Activated CD4-positive, alpha-beta memory T cell treated with anti-CD3 and anti-CD28 coated beads for 36 hours (primary cell): ENCODE measurements at regions of chrX and their contacts with region 1.

Region 1: GRCh38 chrX:17590892-17591740 is 146.2 kb upstream of the SCML1 start:
- DNase-seq: peak; percentile 62
- H3K4me3 Mint-ChIP-seq: no peak overlapping the region
- H3K27ac Mint-ChIP-seq: peak overlapping the region; percentile 74
- H3K4me1 Mint-ChIP-seq: peaks cover 20% of the 10 kb centered on the region
- H3K27me3 Mint-ChIP-seq: peaks cover 4% of the 10 kb centered on the region

Region 2: GRCh38 chrX:17242470-17242869 is 348.6 kb before region 1 on chrX:
- CTCF ChIA-PET with region 1: interaction called, 10 read pairs
- POLR2A ChIA-PET with region 1: no interaction called
- intact Hi-C with region 1: loop called (anchors 1 kb)
- DNase-seq: peak; percentile 23
- H3K4me3 Mint-ChIP-seq: no peak overlapping the region
- H3K27ac Mint-ChIP-seq: no peak overlapping the region
- H3K4me1 Mint-ChIP-seq: no peaks in the 10 kb centered on the region
- H3K27me3 Mint-ChIP-seq: no peaks in the 10 kb centered on the region

Region 3: DNA sequence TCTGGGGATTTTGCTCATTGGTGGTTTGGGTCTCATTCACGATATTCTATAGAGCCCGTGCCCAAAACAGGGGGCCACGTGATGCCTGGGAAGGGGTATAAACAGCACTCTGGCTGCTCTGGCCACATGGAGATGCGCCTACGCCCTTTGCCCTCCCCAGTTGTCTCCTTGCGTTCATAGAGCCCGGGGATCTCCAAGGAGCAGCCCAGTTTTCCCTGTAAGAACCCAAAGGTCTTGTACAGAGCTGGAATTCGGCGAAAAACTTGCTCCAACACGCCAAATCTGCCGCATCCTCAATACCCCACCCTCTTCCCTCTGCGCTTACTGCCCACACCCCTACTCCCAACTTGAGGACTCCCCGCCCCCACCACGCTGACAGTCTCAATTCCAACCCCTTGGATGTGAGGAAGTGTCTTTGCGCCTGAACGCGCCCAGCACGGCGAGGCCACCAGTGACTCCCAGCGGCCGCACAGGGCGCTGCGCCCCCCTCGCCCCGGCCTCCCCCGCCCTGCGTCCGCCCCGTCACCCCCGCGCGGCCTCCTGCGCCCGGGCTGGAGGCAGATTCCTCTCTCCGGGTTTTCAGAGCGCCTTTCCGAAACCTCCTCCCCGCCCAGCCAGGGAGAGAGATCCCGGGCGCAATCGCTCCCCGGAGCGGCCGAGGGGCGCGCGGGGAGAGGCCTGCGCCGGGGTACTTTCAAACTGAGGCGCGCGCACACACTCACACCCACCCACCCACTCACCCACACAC is 216.3 kb before region 1 on chrX and contains the start of gene NHS:
- CTCF ChIA-PET with region 1: no interaction called
- POLR2A ChIA-PET with region 1: no interaction called
- intact Hi-C with region 1: loop called (anchors 1 kb)
- DNase-seq: peak; percentile 31
- H3K4me3 Mint-ChIP-seq: no peak within 1 kb of the TSS
- H3K27ac Mint-ChIP-seq: no peak within 1 kb of the TSS
- H3K4me1 Mint-ChIP-seq: peaks cover 9% of the 10 kb centered on the region
- H3K27me3 Mint-ChIP-seq: peaks cover 22% of the 10 kb centered on the region
- total RNA-seq, gene NHS: 4.8 to 5.0 TPM

Region 4: GRCh38 chrX:17535229-17535628 is 55.9 kb before region 1 on chrX:
- CTCF ChIA-PET with region 1: interaction called, 5 read pairs
- POLR2A ChIA-PET with region 1: no interaction called
- intact Hi-C with region 1: loop called (anchors 1 kb)
- DNase-seq: peak; percentile 69
- H3K4me3 Mint-ChIP-seq: no peak overlapping the region
- H3K27ac Mint-ChIP-seq: no peak overlapping the region
- H3K4me1 Mint-ChIP-seq: peaks cover 17% of the 10 kb centered on the region
- H3K27me3 Mint-ChIP-seq: no peaks in the 10 kb centered on the region

Region 5: DNA sequence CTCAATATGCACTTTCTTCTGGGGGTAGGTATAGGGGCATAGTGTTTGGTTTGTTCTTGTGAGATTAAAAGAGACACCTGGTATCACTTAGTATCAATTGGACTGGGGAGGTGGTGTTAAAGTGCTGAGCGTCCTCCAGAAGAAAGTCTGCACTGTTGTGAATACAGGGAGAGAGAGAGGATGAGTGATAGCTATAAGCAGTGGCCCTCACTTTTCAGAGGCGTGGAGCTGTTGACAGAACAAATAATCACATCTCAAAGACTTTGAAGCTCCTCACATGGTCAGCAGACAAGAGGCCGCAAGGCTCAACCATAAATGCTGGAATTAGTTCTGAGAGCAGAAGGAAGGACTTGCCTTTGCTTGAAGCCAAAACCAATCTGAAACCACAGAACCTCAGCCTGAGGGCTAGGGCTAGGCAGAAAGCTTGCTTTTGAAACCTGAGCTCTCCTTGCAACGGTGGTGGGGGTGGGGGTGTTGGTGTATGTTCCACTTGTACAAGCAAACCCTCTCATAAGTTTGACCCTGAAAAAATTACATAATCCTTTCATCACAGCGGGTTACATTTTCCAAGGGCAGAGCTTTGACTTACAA is 23.0 kb after region 1 on chrX:
- CTCF ChIA-PET with region 1: no interaction called
- POLR2A ChIA-PET with region 1: no interaction called
- intact Hi-C with region 1: no loop called
- DNase-seq: peak; percentile 9
- H3K4me3 Mint-ChIP-seq: no peak overlapping the region
- H3K27ac Mint-ChIP-seq: no peak overlapping the region
- H3K4me1 Mint-ChIP-seq: peaks cover 19% of the 10 kb centered on the region
- H3K27me3 Mint-ChIP-seq: peaks cover 5% of the 10 kb centered on the region

Region 6: DNA sequence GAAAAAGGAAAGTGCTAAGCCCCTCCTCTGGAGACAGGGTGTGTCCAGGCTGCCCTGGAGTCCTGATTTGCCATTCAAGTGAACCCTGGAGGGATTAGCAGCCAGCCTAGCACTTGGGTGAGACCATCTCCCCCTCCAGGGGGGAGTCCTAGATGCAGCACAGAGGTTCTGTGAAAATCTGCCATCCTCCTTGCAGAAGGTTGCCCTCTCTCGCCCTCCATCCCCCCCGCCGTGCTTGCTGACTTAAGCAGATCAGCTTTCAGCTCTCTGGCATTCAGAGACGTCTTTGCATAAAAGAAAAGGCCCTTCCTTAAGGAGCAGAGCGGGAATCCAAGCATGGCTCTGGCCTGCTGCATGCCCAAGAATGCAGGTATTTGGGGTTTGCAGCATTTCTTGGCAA is 44.1 kb after region 1 on chrX:
- CTCF ChIA-PET with region 1: no interaction called
- POLR2A ChIA-PET with region 1: no interaction called
- intact Hi-C with region 1: no loop called
- DNase-seq: no peak
- H3K4me3 Mint-ChIP-seq: no peak overlapping the region
- H3K27ac Mint-ChIP-seq: no peak overlapping the region
- H3K4me1 Mint-ChIP-seq: peaks cover 14% of the 10 kb centered on the region
- H3K27me3 Mint-ChIP-seq: no peaks in the 10 kb centered on the region

Region 7: GRCh38 chrX:17655211-17656034 is 64.3 kb after region 1 on chrX:
- CTCF ChIA-PET with region 1: interaction called, 3 read pairs
- POLR2A ChIA-PET with region 1: no interaction called
- intact Hi-C with region 1: loop called (anchors 10 kb)
- DNase-seq: peak; percentile 35
- H3K4me3 Mint-ChIP-seq: peak overlapping the region; percentile 85
- H3K27ac Mint-ChIP-seq: peak overlapping the region; percentile 81
- H3K4me1 Mint-ChIP-seq: peaks cover 29% of the 10 kb centered on the region
- H3K27me3 Mint-ChIP-seq: no peaks in the 10 kb centered on the region

Region 8: DNA sequence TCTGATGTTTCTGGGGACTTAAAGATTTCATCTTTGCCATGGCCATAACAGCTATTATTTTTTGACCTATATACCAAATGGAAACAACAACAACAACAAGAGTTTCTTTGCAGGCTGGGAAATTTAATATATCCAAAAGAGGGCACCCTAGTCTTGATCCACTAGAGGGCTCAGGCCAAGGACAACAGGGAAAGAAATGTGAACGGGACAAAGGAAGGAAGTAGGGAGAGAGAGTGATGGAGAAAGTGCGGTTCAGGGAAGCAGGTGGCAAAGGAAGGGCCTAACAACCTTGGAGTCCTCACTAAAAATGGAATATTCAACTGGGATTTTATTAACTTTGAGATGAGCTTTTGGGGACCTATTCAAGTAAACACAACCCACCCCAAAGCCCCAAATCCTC is 78.3 kb after region 1 on chrX:
- CTCF ChIA-PET with region 1: no interaction called
- POLR2A ChIA-PET with region 1: no interaction called
- intact Hi-C with region 1: no loop called
- DNase-seq: no peak
- H3K4me3 Mint-ChIP-seq: no peak overlapping the region
- H3K27ac Mint-ChIP-seq: peak overlapping the region; percentile 80
- H3K4me1 Mint-ChIP-seq: peaks cover 16% of the 10 kb centered on the region
- H3K27me3 Mint-ChIP-seq: no peaks in the 10 kb centered on the region